CD8-positive, alpha-beta T cell (primary cell): ENCODE measurements at regions of chr10 and their contacts with region 1.

Region 1: DNA sequence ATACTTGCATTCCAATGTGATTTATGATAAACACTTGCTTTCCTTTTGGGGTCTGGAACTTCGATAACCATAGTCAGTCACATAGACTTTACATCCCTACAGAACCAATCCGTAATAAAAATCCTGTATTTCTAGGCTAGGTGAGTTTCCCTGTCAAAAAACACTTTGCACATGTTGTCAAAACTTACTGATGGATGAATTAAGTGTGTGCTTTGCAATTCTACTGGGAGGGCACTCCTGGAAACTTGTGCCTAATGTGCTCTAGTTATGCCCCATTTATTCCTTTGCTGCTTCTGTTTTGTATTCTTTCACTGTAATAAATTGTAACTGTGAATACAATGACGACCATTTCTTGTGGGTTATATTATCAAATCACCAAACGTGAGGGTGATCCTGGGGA is 684.8 kb upstream of the PCDH15 start:
- DNase-seq: no peak
- ATAC-seq: no peak
- H3K4me3 ChIP-seq: no peak overlapping the region
- H3K4me3 Mint-ChIP-seq: no peak overlapping the region
- H3K27ac ChIP-seq: no peak overlapping the region
- H3K27ac Mint-ChIP-seq: no peak overlapping the region
- H3K4me1 ChIP-seq: no peaks in the 10 kb centered on the region
- H3K4me1 Mint-ChIP-seq: no peaks in the 10 kb centered on the region
- H3K27me3 ChIP-seq: no peaks in the 10 kb centered on the region
- H3K27me3 Mint-ChIP-seq: no peaks in the 10 kb centered on the region
- CTCF ChIP-seq: no peak

Region 2: DNA sequence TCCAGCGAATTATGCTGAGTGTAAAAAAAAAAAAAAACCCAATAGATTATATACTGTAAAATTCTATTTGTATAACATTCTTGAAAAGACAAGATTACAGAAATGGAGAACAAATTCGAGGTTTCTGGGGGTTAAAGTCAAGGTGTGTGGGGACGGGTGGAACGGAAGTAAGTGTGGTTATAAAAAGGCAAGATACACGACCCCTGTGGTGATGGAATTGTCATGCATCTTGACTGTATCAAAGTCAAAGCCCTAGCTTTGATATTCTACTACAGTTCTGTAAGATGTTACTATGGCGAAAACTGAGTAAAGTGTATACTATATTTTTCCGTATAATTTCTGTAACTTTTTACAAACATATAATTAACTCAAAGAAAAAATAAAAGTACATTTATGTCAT is 33.4 kb after region 1 on chr10:
- CTCF ChIA-PET with region 1: no interaction called
- POLR2A ChIA-PET with region 1: no interaction called
- intact Hi-C with region 1: loop called in 1 of 2 experiments (anchors 1 kb)
- DNase-seq: no peak
- ATAC-seq: no peak
- H3K4me3 ChIP-seq: no peak overlapping the region
- H3K4me3 Mint-ChIP-seq: no peak overlapping the region
- H3K27ac ChIP-seq: no peak overlapping the region
- H3K27ac Mint-ChIP-seq: no peak overlapping the region
- H3K4me1 ChIP-seq: no peaks in the 10 kb centered on the region
- H3K4me1 Mint-ChIP-seq: no peaks in the 10 kb centered on the region
- H3K27me3 ChIP-seq: no peaks in the 10 kb centered on the region
- H3K27me3 Mint-ChIP-seq: no peaks in the 10 kb centered on the region
- CTCF ChIP-seq: no peak

Region 3: GRCh38 chr10:55668326-55668922 is 182.6 kb after region 1 on chr10:
- CTCF ChIA-PET with region 1: no interaction called
- POLR2A ChIA-PET with region 1: no interaction called
- intact Hi-C with region 1: no loop called
- DNase-seq: no peak
- ATAC-seq: no peak
- H3K4me3 ChIP-seq: no peak overlapping the region
- H3K4me3 Mint-ChIP-seq: no peak overlapping the region
- H3K27ac ChIP-seq: no peak overlapping the region
- H3K27ac Mint-ChIP-seq: no peak overlapping the region
- H3K4me1 ChIP-seq: no peaks in the 10 kb centered on the region
- H3K4me1 Mint-ChIP-seq: no peaks in the 10 kb centered on the region
- H3K27me3 ChIP-seq: no peaks in the 10 kb centered on the region
- H3K27me3 Mint-ChIP-seq: no peaks in the 10 kb centered on the region
- CTCF ChIP-seq: no peak